Ovary (tissue), 10 donors: ENCODE measurements at regions of chr1 and their contacts with region 1.

Region 1: GRCh38 chr1:145978854-145979759 is 14.6 kb downstream of the POLR3GL start:
- DNase-seq: peak; percentile 79 to 94 (median 86)
- H3K4me3 ChIP-seq: peak overlapping the region; percentile 23
- H3K27ac ChIP-seq: peak overlapping the region; percentile 72 to 76
- H3K4me1 ChIP-seq: peaks cover 27% of the 10 kb centered on the region
- H3K27me3 ChIP-seq: no peaks in the 10 kb centered on the region
- CTCF ChIP-seq: no peak
- EP300 ChIP-seq: peak; percentile 81
- POLR2A ChIP-seq: peak; percentile 87

Region 2: DNA sequence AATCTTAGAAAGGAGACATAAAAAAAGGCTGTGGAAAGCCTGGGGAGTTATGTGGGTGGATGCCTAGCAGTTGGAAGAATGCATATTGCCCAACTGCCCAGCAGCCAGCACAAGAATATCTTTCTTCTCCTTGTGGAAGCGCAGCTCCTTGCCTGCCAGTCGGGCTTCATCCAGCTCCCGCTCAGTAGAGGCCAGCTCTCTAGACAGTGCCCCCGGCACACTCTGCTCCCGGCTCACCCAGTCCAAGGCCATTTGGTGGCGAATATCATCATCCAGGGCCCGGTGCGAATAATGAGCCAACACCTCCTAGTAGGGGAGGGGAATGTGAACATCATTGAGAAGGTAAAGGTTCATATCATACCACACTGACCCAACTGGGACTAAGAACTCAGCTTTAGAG is 42.9 kb before region 1 on chr1:
- intact Hi-C with region 1: no loop called
- DNase-seq: no peak
- H3K4me3 ChIP-seq: no peak overlapping the region
- H3K27ac ChIP-seq: no peak overlapping the region
- H3K4me1 ChIP-seq: no peaks in the 10 kb centered on the region
- H3K27me3 ChIP-seq: no peaks in the 10 kb centered on the region
- CTCF ChIP-seq: no peak
- EP300 ChIP-seq: no peak
- POLR2A ChIP-seq: no peak

Region 3: GRCh38 chr1:145999321-146000241 is 20.5 kb after region 1 on chr1:
- intact Hi-C with region 1: loop called in 1 of 4 experiments (anchors 2 kb)
- DNase-seq: peak; percentile 51 to 64 (median 57)
- H3K4me3 ChIP-seq: peak overlapping the region; percentile 18
- H3K27ac ChIP-seq: peak overlapping the region; percentile 37 to 74
- H3K4me1 ChIP-seq: peaks cover 5% of the 10 kb centered on the region
- H3K27me3 ChIP-seq: no peaks in the 10 kb centered on the region
- CTCF ChIP-seq: no peak
- EP300 ChIP-seq: no peak
- POLR2A ChIP-seq: no peak

Region 4: GRCh38 chr1:146007506-146008133 is 28.5 kb after region 1 on chr1:
- intact Hi-C with region 1: loop called in 3 of 4 experiments (anchors 1 to 2 kb)
- DNase-seq: no peak
- H3K4me3 ChIP-seq: no peak overlapping the region
- H3K27ac ChIP-seq: no peak overlapping the region
- H3K4me1 ChIP-seq: peaks cover 4% of the 10 kb centered on the region
- H3K27me3 ChIP-seq: no peaks in the 10 kb centered on the region
- CTCF ChIP-seq: no peak
- EP300 ChIP-seq: no peak
- POLR2A ChIP-seq: no peak

Region 5: DNA sequence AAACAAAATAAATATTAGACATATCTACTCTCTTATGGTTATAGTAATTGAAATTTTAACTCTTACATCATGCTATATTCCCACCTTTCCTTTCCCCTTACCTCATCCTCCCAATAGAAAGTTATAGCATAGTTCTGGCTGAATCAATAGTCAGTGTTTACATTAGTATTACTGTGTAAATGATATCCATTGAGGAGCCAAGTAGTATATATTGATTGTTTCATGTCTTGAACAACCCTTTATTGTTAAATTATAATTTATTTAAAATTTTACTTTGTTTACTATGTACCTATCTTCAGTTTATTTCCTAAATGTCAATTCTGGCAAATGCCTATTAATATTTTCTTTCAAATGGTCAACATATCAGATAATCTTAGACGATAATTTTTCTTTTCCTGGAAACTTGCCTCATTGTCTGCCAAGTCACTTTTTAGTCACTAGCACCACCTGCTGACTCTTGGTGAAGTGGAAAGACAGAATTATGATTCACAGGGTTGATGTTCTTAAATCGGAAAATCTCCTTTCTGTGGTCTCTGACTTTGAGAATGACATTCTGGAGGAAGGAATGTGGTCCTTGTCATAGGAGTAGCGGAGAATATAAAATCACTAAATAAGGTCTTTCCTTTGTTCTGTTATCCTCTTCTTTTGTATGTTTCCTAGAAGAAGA is 33.8 kb after region 1 on chr1:
- intact Hi-C with region 1: loop called in 1 of 4 experiments (anchors 2 kb)
- DNase-seq: peak in 2 of 5 donors; percentile 36 to 63
- H3K4me3 ChIP-seq: no peak overlapping the region
- H3K27ac ChIP-seq: no peak overlapping the region
- H3K4me1 ChIP-seq: peaks cover 4% of the 10 kb centered on the region
- H3K27me3 ChIP-seq: no peaks in the 10 kb centered on the region
- CTCF ChIP-seq: peak; percentile 39 to 91 (median 84)
- EP300 ChIP-seq: no peak
- POLR2A ChIP-seq: no peak